Heart left ventricle (tissue), 16 donors: ENCODE measurements at regions of chr17 and their contacts with region 1.

Region 1: GRCh38 chr17:7252176-7253043 is at the start of gene ELP5:
- DNase-seq: peak; percentile 95 to 98 (median 96)
- ATAC-seq: peak; percentile 72 to 86 (median 82)
- H3K4me3 ChIP-seq: peak within 1 kb of the TSS; percentile 57 to 100 (median 94)
- H3K27ac ChIP-seq: peak within 1 kb of the TSS; percentile 96 to 100 (median 99)
- H3K4me1 ChIP-seq: peaks cover 8 to 46% (median 37%) of the 10 kb centered on the region in 12 donors
- H3K27me3 ChIP-seq: no peaks in the 10 kb centered on the region
- CTCF ChIP-seq: peak in 8 of 12 donors; percentile 26 to 58 (median 40)
- POLR2A ChIP-seq: peak in 1 of 2 donors; percentile 42
- total RNA-seq, gene ELP5: 28.0 to 87.2 (median 52.6) TPM

Region 2: GRCh38 chr17:7214300-7215135 is 37.9 kb before region 1 on chr17:
- intact Hi-C with region 1: loop called in 1 of 10 experiments (anchors 5 kb)
- DNase-seq: peak; percentile 98 to 100 (median 99)
- ATAC-seq: peak; percentile 89 to 92 (median 90)
- H3K4me3 ChIP-seq: peak overlapping the region; percentile 19 to 77 (median 64)
- H3K27ac ChIP-seq: peak overlapping the region in 11 of 12 donors; percentile 44 to 99 (median 70)
- H3K4me1 ChIP-seq: peaks cover 0 to 67% (median 45%) of the 10 kb centered on the region in 12 donors
- H3K27me3 ChIP-seq: no peaks in the 10 kb centered on the region
- CTCF ChIP-seq: peak; percentile 24 to 72 (median 48)
- POLR2A ChIP-seq: no peak

Region 3: DNA sequence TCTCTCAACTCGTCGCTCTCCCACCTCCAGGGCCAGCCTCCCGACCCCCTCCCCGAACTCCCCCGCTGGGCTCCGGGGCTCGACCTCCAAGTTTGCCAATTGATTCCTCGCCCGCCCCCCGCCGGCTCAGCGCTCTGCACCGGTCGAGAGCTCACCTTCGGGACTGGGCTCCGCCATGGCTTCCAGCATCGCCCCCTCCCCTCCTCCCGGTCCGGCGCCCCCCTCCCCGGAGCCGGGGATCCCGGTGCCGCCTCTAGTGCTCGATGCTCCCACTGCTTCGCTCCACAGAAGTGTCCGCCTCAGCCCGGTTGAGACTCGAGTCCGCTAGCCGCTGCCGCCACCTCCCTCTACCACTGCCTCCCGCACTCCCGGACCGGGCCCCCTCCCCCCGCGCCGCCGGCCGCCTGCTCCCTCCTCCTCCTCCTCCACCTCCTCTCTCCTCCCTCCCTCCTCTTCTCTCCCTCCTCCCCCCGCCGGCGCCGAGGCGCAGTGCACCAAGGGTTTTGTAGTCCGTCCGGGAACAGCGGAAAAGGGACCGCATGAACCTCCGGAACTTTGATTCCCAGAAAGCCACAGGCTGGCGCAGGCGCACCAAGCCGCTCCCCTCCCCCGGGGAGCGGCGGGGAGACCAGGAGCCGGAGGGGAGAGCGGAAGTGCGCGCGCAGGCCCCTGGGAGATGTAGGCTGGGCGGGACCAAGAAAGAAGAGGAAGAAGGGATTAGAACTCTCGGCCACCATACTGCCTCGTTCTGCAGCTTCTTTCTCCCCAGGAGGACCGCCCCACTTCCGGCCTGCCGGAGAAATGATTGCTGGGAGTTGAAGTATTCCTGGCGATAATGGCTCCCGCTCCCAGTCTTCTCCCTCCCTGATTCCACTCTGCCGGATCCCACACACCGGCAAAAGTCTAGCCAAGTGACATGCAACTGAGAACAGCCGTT is 13.1 kb before region 1 on chr17 and contains the start of gene PHF23:
- intact Hi-C with region 1: loop called in 1 of 10 experiments (anchors 1 kb)
- DNase-seq: peak; percentile 99 to 100 (median 99)
- ATAC-seq: peak; percentile 79 to 86 (median 84)
- H3K4me3 ChIP-seq: peak within 1 kb of the TSS; percentile 66 to 98 (median 90)
- H3K27ac ChIP-seq: peak within 1 kb of the TSS; percentile 81 to 98 (median 94)
- H3K4me1 ChIP-seq: peaks cover 5 to 58% (median 40%) of the 10 kb centered on the region in 12 donors
- H3K27me3 ChIP-seq: no peaks in the 10 kb centered on the region
- CTCF ChIP-seq: peak in 1 of 12 donors; percentile 9
- POLR2A ChIP-seq: peak in 1 of 2 donors; percentile 56
- total RNA-seq, gene PHF23: 19.1 to 36.7 (median 23.0) TPM

Region 4: GRCh38 chr17:7280519-7281429 is 28.4 kb after region 1 on chr17:
- intact Hi-C with region 1: loop called in 1 of 10 experiments (anchors 1 kb)
- DNase-seq: peak; percentile 86 to 94 (median 90)
- ATAC-seq: peak; percentile 69 to 77 (median 72)
- H3K4me3 ChIP-seq: peak overlapping the region in 11 of 12 donors; percentile 26 to 76 (median 65)
- H3K27ac ChIP-seq: peak overlapping the region; percentile 90 to 99 (median 96)
- H3K4me1 ChIP-seq: peaks cover 4 to 49% (median 21%) of the 10 kb centered on the region in 12 donors
- H3K27me3 ChIP-seq: peaks cover 0 to 24% (median 3%) of the 10 kb centered on the region in 9 donors
- CTCF ChIP-seq: peak; percentile 84 to 97 (median 94)
- POLR2A ChIP-seq: no peak

Region 5: DNA sequence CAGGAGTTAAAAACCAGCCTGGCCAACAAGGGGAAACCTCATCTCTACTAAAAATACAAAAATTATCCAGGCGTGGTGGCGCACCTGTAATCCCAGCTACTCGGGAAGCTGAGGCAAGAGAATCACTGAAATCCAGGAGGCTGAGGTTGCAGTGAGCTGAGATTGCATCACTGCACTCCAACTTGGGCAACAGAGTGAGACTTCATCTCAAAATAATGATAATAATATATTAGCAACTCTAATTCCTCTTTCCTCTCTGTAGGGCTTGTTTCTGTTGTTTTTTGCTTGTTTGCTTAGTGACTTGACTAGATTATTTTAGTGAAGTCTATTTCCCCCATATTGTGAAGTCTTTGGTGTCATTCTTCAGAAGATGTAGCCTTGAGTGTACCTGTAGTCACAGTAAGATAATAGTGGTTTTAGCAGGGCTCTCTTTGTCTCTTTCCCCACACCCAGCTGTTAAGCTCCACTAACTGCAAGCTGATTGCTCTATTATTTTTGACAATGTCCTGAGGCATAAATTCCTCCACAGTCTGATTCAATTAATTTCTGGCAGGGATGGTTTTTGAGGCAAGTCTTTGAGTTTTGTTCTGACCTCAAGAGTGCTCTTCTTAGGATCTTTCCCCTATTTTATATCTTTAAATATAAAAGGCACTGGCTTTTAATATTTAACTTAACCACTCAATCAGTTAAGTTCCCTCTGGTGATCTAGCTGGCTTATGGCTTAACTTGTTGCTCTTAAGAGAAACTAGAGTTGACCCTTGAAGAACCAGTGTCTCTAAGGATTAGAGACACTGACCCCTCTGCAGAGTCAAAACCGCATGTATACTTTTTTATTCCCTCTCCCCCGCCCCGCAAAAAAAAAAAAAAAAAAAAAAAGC is 277.9 kb after region 1 on chr17:
- intact Hi-C with region 1: no loop called
- DNase-seq: no peak
- ATAC-seq: no peak
- H3K4me3 ChIP-seq: no peak overlapping the region
- H3K27ac ChIP-seq: no peak overlapping the region
- H3K4me1 ChIP-seq: no peaks in the 10 kb centered on the region
- H3K27me3 ChIP-seq: no peaks in the 10 kb centered on the region
- CTCF ChIP-seq: no peak
- POLR2A ChIP-seq: no peak

Region 6: GRCh38 chr17:7572588-7573323 is 320.3 kb after region 1 on chr17:
- intact Hi-C with region 1: loop called in 2 of 10 experiments (anchors 10 kb)
- DNase-seq: peak; percentile 99 to 100 (median 99)
- ATAC-seq: peak; percentile 92 to 96 (median 96)
- H3K4me3 ChIP-seq: peak overlapping the region; percentile 77 to 100 (median 100)
- H3K27ac ChIP-seq: peak overlapping the region; percentile 80 to 100 (median 98)
- H3K4me1 ChIP-seq: peaks cover 4 to 50% (median 32%) of the 10 kb centered on the region in 12 donors
- H3K27me3 ChIP-seq: no peaks in the 10 kb centered on the region
- CTCF ChIP-seq: no peak
- POLR2A ChIP-seq: peak; percentile 95 to 99